CD4-positive, alpha-beta memory T cell (primary cell): ENCODE measurements at regions of chr12 and their contacts with region 1.

Region 1: GRCh38 chr12:103965590-103966504 is at the start of gene TDG:
- DNase-seq: peak; percentile 93 to 99 (median 96)
- H3K4me3 ChIP-seq: peak within 1 kb of the TSS; percentile 65 to 99
- H3K4me3 Mint-ChIP-seq: peak within 1 kb of the TSS; percentile 98 to 99 (median 98)
- H3K27ac ChIP-seq: peak within 1 kb of the TSS; percentile 84
- H3K27ac Mint-ChIP-seq: peak within 1 kb of the TSS; percentile 97 to 100 (median 99)
- H3K4me1 ChIP-seq: peaks cover 56% of the 10 kb centered on the region
- H3K4me1 Mint-ChIP-seq: peaks cover 28 to 67% (median 54%) of the 10 kb centered on the region in 4 donors
- H3K27me3 ChIP-seq: no peaks in the 10 kb centered on the region
- H3K27me3 Mint-ChIP-seq: no peaks in the 10 kb centered on the region
- total RNA-seq, gene TDG: 35.1 to 38.3 TPM

Region 2: GRCh38 chr12:103840876-103841689 is 124.8 kb before region 1 on chr12 and contains the start of gene NT5DC3:
- CTCF ChIA-PET with region 1: no interaction called
- POLR2A ChIA-PET with region 1: interaction called, 3 read pairs
- intact Hi-C with region 1: loop called (anchors 2 kb)
- DNase-seq: peak; percentile 80 to 90 (median 86)
- H3K4me3 ChIP-seq: peak within 1 kb of the TSS; percentile 44 to 63
- H3K4me3 Mint-ChIP-seq: peak within 1 kb of the TSS; percentile 87 to 97 (median 89)
- H3K27ac ChIP-seq: peak within 1 kb of the TSS; percentile 35
- H3K27ac Mint-ChIP-seq: peak within 1 kb of the TSS; percentile 69 to 90 (median 86)
- H3K4me1 ChIP-seq: peaks cover 14% of the 10 kb centered on the region
- H3K4me1 Mint-ChIP-seq: peaks cover 6 to 26% (median 13%) of the 10 kb centered on the region in 4 donors
- H3K27me3 ChIP-seq: no peaks in the 10 kb centered on the region
- H3K27me3 Mint-ChIP-seq: no peaks in the 10 kb centered on the region
- total RNA-seq, gene NT5DC3: 6.1 to 6.8 TPM

Region 3: DNA sequence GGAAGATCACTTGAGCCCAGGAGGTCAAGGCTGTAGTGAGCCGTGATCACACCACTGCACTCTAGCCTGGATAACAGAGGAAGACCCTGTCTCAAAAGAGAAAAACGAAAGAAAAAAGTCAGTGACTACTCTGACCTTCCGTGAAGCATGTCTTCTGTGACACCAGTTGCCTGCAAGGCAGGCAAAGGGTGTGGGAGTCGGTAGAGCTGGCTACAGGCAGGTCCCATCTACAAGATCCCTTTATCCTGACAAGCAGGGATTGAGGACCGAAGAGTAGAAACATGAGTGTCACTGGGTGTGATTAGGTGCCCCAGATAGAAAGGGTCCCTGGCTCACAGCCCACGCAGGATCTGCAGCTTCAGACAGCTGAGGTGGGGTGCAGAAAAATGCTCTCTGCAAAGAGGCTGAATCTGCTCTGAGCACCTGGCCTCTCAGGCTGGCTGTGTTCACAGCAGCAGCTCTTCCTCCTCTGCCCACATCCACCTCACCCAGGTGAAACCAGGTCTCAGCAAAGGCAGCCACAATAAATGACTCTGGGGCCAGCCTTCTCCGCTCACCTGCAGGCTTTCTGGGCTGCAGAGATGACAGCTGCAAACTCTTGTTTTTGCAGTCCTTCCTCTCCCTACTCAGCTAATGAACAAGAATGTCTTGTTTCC is 64.2 kb before region 1 on chr12:
- CTCF ChIA-PET with region 1: no interaction called
- POLR2A ChIA-PET with region 1: interaction called, 11 read pairs
- intact Hi-C with region 1: no loop called
- DNase-seq: peak; percentile 59 to 71 (median 67)
- H3K4me3 ChIP-seq: peak overlapping the region in 1 of 2 donors; percentile 40
- H3K4me3 Mint-ChIP-seq: peak overlapping the region; percentile 64 to 85 (median 74)
- H3K27ac ChIP-seq: peak overlapping the region; percentile 41
- H3K27ac Mint-ChIP-seq: peak overlapping the region; percentile 82 to 92 (median 85)
- H3K4me1 ChIP-seq: peaks cover 47% of the 10 kb centered on the region
- H3K4me1 Mint-ChIP-seq: peaks cover 42 to 62% (median 50%) of the 10 kb centered on the region in 4 donors
- H3K27me3 ChIP-seq: no peaks in the 10 kb centered on the region
- H3K27me3 Mint-ChIP-seq: no peaks in the 10 kb centered on the region

Region 4: DNA sequence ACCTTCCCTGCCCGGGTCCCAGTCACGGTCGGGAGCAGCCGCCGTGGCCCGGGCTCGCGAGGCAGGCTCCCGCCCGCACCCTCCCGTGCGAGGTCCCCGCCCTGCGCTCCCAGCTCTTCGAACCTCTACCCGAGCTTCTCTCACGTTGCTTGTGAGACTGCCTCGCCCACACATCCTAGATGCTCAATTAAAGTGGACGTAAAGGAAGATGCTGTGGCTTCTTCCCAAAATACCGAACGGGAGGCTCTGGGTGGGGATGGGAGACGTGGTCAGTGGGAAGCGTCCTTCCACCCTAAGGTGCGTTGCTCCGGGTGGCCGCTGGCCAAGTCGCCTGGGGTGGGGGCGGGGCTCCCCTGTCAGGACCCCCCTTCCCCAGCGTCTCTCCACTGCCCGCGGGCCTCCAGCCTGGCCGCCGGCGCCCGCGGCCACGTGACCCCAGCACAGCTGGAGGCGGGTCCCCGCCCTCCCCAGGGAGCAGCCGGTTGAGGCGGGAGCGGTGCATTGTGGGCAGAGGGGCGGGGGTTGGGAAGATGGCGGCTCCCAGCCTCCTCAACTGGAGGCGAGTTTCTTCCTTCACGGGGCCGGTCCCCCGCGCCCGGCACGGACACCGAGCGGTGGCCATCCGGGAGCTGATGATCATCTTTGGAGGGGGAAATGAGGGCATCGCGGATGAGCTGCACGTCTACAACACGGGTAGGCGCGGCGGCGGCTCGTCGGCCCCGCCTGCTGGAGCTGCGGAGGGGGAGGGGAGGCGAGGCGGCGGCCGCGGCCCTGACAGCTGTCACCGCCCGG is 98.4 kb after region 1 on chr12 and contains the start of gene HCFC2:
- CTCF ChIA-PET with region 1: interaction called, 3 read pairs
- POLR2A ChIA-PET with region 1: interaction called, 16 read pairs
- intact Hi-C with region 1: loop called (anchors 2 kb)
- DNase-seq: peak; percentile 83 to 91 (median 86)
- H3K4me3 ChIP-seq: peak within 1 kb of the TSS; percentile 91 to 98
- H3K4me3 Mint-ChIP-seq: peak within 1 kb of the TSS; percentile 91 to 97 (median 94)
- H3K27ac ChIP-seq: peak within 1 kb of the TSS; percentile 77
- H3K27ac Mint-ChIP-seq: peak within 1 kb of the TSS; percentile 85 to 95 (median 92)
- H3K4me1 ChIP-seq: peaks cover 21% of the 10 kb centered on the region
- H3K4me1 Mint-ChIP-seq: peaks cover 18 to 35% (median 23%) of the 10 kb centered on the region in 4 donors
- H3K27me3 ChIP-seq: peaks cover 5% of the 10 kb centered on the region
- H3K27me3 Mint-ChIP-seq: peaks cover 4 to 5% of the 10 kb centered on the region in 2 donors
- total RNA-seq, gene HCFC2: 18.1 to 18.5 TPM

Region 5: GRCh38 chr12:104137913-104138796 is 172.3 kb after region 1 on chr12 and contains the start of gene NFYB:
- CTCF ChIA-PET with region 1: no interaction called
- POLR2A ChIA-PET with region 1: interaction called, 18 read pairs
- intact Hi-C with region 1: loop called (anchors 5 kb)
- DNase-seq: peak; percentile 95 to 97 (median 95)
- H3K4me3 ChIP-seq: peak within 1 kb of the TSS; percentile 37 to 66
- H3K4me3 Mint-ChIP-seq: peak within 1 kb of the TSS; percentile 90 to 95 (median 94)
- H3K27ac ChIP-seq: peak within 1 kb of the TSS; percentile 75
- H3K27ac Mint-ChIP-seq: peak within 1 kb of the TSS; percentile 85 to 97 (median 92)
- H3K4me1 ChIP-seq: peaks cover 35% of the 10 kb centered on the region
- H3K4me1 Mint-ChIP-seq: peaks cover 12 to 21% (median 16%) of the 10 kb centered on the region in 4 donors
- H3K27me3 ChIP-seq: no peaks in the 10 kb centered on the region
- H3K27me3 Mint-ChIP-seq: peaks cover 0 to 2% of the 10 kb centered on the region in 2 donors
- total RNA-seq, gene NFYB: 29.9 to 32.5 TPM

Region 6: DNA sequence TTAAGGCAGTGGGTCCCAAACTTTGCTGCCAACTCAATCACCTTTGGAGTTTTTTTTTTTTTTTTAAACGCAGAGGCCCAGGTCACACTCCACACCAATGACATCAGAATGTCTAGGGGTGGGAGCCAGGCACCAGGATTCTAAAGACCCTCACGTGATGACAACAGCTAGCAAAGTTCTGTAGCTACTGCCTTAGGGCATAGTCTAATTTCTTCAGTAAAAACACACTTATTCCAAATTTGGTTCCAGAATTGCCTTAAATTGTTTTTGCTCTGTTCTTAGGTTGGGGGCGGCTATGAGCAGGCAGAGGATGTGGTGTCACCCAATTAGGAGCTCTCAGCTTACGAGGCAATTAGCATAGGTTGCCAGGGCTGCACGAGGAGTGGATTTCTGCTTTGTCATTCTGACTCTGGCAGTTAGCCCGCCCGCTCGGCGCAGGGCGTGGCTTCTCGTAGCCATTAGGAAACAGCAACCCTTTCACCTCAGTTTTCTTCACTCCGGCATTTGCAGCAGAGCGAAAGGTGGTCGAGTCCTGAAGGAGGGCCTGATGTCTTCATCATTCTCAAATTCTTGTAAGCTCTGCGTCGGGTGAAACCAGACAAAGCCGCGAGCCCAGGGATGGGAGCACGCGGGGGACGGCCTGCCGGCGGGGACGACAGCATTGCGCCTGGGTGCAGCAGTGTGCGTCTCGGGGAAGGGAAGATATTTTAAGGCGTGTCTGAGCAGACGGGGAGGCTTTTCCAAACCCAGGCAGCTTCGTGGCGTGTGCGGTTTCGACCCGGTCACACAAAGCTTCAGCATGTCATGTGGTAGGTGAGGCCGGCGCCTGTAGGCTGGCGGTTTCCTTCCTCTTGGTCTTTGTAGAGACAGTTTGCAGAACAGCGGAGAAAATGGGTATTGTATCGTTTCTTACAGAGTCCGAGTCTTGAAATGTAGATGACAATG is 321.0 kb after region 1 on chr12:
- CTCF ChIA-PET with region 1: no interaction called
- POLR2A ChIA-PET with region 1: interaction called, 5 read pairs
- intact Hi-C with region 1: loop called (anchors 5 kb)
- DNase-seq: peak; percentile 87 to 94 (median 88)
- H3K4me3 ChIP-seq: peak overlapping the region; percentile 80 to 96
- H3K4me3 Mint-ChIP-seq: peak overlapping the region; percentile 94 to 100 (median 99)
- H3K27ac ChIP-seq: peak overlapping the region; percentile 82
- H3K27ac Mint-ChIP-seq: peak overlapping the region; percentile 94 to 99 (median 96)
- H3K4me1 ChIP-seq: peaks cover 35% of the 10 kb centered on the region
- H3K4me1 Mint-ChIP-seq: peaks cover 23 to 41% (median 30%) of the 10 kb centered on the region in 4 donors
- H3K27me3 ChIP-seq: no peaks in the 10 kb centered on the region
- H3K27me3 Mint-ChIP-seq: peaks cover 0 to 2% of the 10 kb centered on the region in 2 donors